H1 (cell line): ENCODE measurements at regions of chr11 and their contacts with region 1.

Region 1: GRCh38 chr11:118956094-118956846 is at the start of gene UPK2:
- DNase-seq: peak; percentile 75 to 98
- H3K4me3 ChIP-seq: no peak within 1 kb of the TSS
- H3K27ac ChIP-seq: no peak within 1 kb of the TSS
- H3K4me1 ChIP-seq: peaks cover 0 to 5% (median 1%) of the 10 kb centered on the region in 4 experiments; a peak in 3 of 7 replicates
- H3K27me3 ChIP-seq: peaks cover 0 to 4% (median 3%) of the 10 kb centered on the region in 4 experiments; a peak in 2 of 7 replicates
- CTCF ChIP-seq: peak; percentile 98 to 99 (median 99)
- EP300 ChIP-seq: no peak
- POLR2A ChIP-seq: no peak
- RAD21 ChIP-seq: peak; percentile 99
- total RNA-seq, gene UPK2: not detected in 2 replicates

Region 2: GRCh38 chr11:118907051-118908042 is 48.9 kb before region 1 on chr11:
- CTCF ChIA-PET with region 1: interaction called, 12 read pairs
- POLR2A ChIA-PET with region 1: interaction called, 6 read pairs
- DNase-seq: peak in 1 of 2 experiments; percentile 97
- H3K4me3 ChIP-seq: peak overlapping the region in 3 of 4 experiments; percentile 12 to 38 (median 15); a peak in 4 of 8 replicates
- H3K27ac ChIP-seq: peak overlapping the region; percentile 46; the same call in 1 of the 2 replicates
- H3K4me1 ChIP-seq: peaks cover 4 to 39% (median 31%) of the 10 kb centered on the region in 4 experiments
- H3K27me3 ChIP-seq: no peaks in the 10 kb centered on the region
- CTCF ChIP-seq: peak in 2 of 3 experiments; percentile 95 to 97; a peak in 3 of 4 replicates
- EP300 ChIP-seq: no peak
- POLR2A ChIP-seq: no peak; a peak in 1 of 3 replicates
- RAD21 ChIP-seq: peak; percentile 98 to 100

Region 3: GRCh38 chr11:118928108-118928870 is 28.0 kb before region 1 on chr11:
- CTCF ChIA-PET with region 1: interaction called, 100 read pairs
- POLR2A ChIA-PET with region 1: interaction called, 5 read pairs
- DNase-seq: peak in 1 of 2 experiments; percentile 99
- H3K4me3 ChIP-seq: peak overlapping the region; percentile 86 to 95 (median 88)
- H3K27ac ChIP-seq: no peak overlapping the region
- H3K4me1 ChIP-seq: peaks cover 7 to 31% (median 20%) of the 10 kb centered on the region in 4 experiments
- H3K27me3 ChIP-seq: peaks cover 0 to 6% (median 0%) of the 10 kb centered on the region in 4 experiments; a peak in 3 of 7 replicates
- CTCF ChIP-seq: peak; percentile 80 to 92 (median 88)
- EP300 ChIP-seq: no peak
- POLR2A ChIP-seq: no peak
- RAD21 ChIP-seq: peak; percentile 64 to 76

Region 4: DNA sequence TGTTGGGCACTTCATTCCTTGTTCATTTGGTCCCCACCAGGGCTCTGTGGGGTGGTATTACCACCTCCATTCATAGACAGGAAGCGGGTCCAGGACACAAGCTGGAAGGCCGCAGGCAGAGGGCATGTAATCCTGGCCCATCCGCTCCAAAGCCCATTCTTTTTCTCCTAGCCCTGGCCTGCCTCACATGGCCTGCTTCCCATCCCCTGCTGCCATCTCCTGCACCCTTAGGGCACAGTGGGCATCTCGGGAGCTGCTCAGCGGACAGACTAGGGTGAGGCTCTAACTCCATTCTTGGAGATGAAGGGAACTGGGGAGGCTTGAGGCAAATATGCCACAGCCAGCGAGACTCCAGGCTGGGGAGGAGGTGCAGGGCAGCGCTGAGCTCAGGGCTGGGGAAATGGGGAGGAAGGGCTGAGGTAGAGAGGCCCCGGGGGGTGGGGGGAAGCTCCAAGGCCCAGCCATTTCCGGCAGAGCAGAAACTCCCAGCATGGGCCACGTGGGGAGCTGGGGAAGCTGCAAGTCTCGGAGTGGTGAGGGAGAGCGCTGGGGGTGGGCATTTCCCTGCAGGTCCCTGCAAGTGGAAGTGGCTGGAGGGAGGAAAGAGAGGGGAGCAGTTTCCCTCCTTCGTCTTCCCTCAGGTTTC is 16.2 kb before region 1 on chr11:
- CTCF ChIA-PET with region 1: interaction called, 19 read pairs
- POLR2A ChIA-PET with region 1: interaction called, 7 read pairs
- DNase-seq: no peak
- H3K4me3 ChIP-seq: no peak overlapping the region
- H3K27ac ChIP-seq: no peak overlapping the region
- H3K4me1 ChIP-seq: peaks cover 7 to 17% (median 12%) of the 10 kb centered on the region in 4 experiments
- H3K27me3 ChIP-seq: 0 out of 7 replicates have a peak, but pooled peaks cover 0 to 4% (median 1%) of the 10 kb centered on the region in 4 experiments
- CTCF ChIP-seq: no peak
- EP300 ChIP-seq: no peak
- POLR2A ChIP-seq: no peak
- RAD21 ChIP-seq: no peak